Naive thymus-derived CD4-positive, alpha-beta T cell (primary cell): ENCODE measurements at regions of chr17 and their contacts with region 1.

Region 1: GRCh38 chr17:48878918-48879898 is 13.4 kb upstream of the ATP5MC1 start:
- DNase-seq: peak; percentile 21 to 77 (median 69)
- ATAC-seq: peak; percentile 97
- H3K4me3 ChIP-seq: no peak overlapping the region
- H3K4me3 Mint-ChIP-seq: no peak overlapping the region
- H3K27ac ChIP-seq: no peak overlapping the region
- H3K27ac Mint-ChIP-seq: no peak overlapping the region
- H3K4me1 ChIP-seq: no peaks in the 10 kb centered on the region
- H3K4me1 Mint-ChIP-seq: peaks cover 0 to 16% (median under 1%) of the 10 kb centered on the region in 7 donors
- H3K27me3 ChIP-seq: no peaks in the 10 kb centered on the region
- H3K27me3 Mint-ChIP-seq: peaks cover 0 to 4% (median 0%) of the 10 kb centered on the region in 5 donors

Region 2: DNA sequence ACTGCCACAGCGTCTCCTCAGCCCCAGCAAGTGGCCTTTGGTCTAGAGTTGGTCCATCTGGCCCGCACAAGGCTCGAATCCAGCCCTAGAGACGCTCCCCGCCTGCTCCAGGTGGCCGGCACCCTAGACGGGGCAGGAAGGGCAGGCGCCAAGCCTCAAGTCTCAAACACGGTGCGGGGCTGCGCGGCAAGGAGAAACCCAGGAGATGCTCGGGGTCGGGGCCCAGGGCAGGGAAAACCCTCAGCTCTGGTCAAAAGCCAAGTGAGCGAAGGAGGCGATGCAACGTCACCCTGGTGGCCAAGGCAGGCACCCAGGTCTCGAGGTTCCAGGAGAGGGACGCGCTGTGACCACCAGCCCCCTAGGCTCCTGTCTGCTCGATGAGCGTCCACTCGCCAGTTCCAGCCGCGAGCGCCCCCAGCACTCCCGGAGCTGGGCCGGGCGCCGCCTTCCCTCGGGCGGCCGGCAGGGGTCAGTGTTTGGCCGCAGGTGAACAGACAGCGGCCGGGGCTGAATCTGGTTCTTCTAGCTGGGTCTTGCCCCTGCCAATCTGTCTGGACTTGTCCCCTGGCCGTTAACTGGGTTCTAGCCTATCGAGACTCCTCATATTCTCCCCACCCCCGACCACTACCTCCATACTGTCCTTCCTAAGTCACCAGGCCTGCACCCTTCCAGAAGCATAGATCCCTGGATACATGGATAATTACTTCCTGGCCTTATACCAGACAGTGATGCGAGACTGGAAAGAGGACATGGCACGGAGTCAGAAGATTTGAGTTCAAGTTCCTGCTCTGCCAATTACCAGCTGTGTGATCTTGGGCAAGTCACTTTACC is 200.9 kb before region 1 on chr17:
- CTCF ChIA-PET with region 1: interaction called, 41 read pairs
- POLR2A ChIA-PET with region 1: no interaction called
- intact Hi-C with region 1: loop called (anchors 1 to 2 kb)
- DNase-seq: peak; percentile 43 to 80 (median 61)
- ATAC-seq: peak; percentile 95
- H3K4me3 ChIP-seq: no peak overlapping the region
- H3K4me3 Mint-ChIP-seq: peak overlapping the region in 4 of 10 donors; percentile 33 to 67 (median 43)
- H3K27ac ChIP-seq: no peak overlapping the region
- H3K27ac Mint-ChIP-seq: peak overlapping the region in 1 of 9 donors; percentile 43
- H3K4me1 ChIP-seq: no peaks in the 10 kb centered on the region
- H3K4me1 Mint-ChIP-seq: peaks cover 0 to 6% (median 0%) of the 10 kb centered on the region in 7 donors
- H3K27me3 ChIP-seq: no peaks in the 10 kb centered on the region
- H3K27me3 Mint-ChIP-seq: peaks cover 26 to 72% (median 47%) of the 10 kb centered on the region in 5 donors

Region 3: DNA sequence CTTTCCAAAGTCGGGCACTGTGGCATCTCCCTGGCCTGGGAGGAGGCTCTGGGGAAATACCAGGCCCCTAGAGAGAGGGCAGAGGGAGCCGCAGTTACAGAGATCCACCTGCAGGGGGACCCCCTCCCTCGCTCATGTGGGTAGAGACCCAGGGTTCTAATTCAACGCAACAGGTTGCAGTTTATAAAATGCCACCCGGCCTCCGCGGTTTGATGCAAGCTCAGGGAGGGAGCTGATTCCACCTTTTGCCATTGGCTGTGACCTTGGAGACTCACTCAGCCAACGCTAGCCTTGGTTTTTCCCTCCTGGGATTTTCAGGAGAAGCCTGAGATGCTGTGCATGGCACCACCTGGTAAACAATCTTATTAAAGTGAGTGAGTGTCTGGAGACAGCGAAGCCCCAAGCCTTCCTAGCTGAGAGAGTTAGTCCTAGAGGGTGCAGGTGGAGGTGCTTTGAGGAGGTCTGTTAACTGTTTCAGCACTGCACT is 74.2 kb before region 1 on chr17:
- CTCF ChIA-PET with region 1: interaction called, 112 read pairs
- POLR2A ChIA-PET with region 1: interaction called, 4 read pairs
- intact Hi-C with region 1: loop called (anchors 1 kb)
- DNase-seq: peak; percentile 34 to 74 (median 61)
- ATAC-seq: peak; percentile 94
- H3K4me3 ChIP-seq: no peak overlapping the region
- H3K4me3 Mint-ChIP-seq: no peak overlapping the region
- H3K27ac ChIP-seq: no peak overlapping the region
- H3K27ac Mint-ChIP-seq: peak overlapping the region in 1 of 9 donors; percentile 16
- H3K4me1 ChIP-seq: no peaks in the 10 kb centered on the region
- H3K4me1 Mint-ChIP-seq: peaks cover 0 to 4% (median 0%) of the 10 kb centered on the region in 7 donors
- H3K27me3 ChIP-seq: peaks cover 0 to 3% of the 10 kb centered on the region in 2 donors
- H3K27me3 Mint-ChIP-seq: peaks cover 3 to 36% (median 13%) of the 10 kb centered on the region in 5 donors

Region 4: GRCh38 chr17:48841395-48841831 is 37.8 kb before region 1 on chr17:
- CTCF ChIA-PET with region 1: interaction called, 12 read pairs
- POLR2A ChIA-PET with region 1: no interaction called
- intact Hi-C with region 1: loop called in 1 of 2 experiments (anchors 1 kb)
- DNase-seq: peak in 7 of 9 donors; percentile 48 to 75 (median 62)
- ATAC-seq: peak; percentile 94
- H3K4me3 ChIP-seq: peak overlapping the region; percentile 35
- H3K4me3 Mint-ChIP-seq: peak overlapping the region; percentile 79 to 98 (median 87)
- H3K27ac ChIP-seq: peak overlapping the region; percentile 73
- H3K27ac Mint-ChIP-seq: peak overlapping the region; percentile 84 to 98 (median 95)
- H3K4me1 ChIP-seq: peaks cover 38 to 47% of the 10 kb centered on the region in 2 donors
- H3K4me1 Mint-ChIP-seq: peaks cover 33 to 67% (median 61%) of the 10 kb centered on the region in 7 donors
- H3K27me3 ChIP-seq: no peaks in the 10 kb centered on the region
- H3K27me3 Mint-ChIP-seq: no peaks in the 10 kb centered on the region